CD8-positive, alpha-beta memory T cell (primary cell): ENCODE measurements at regions of chr2 and their contacts with region 1.

Region 1: GRCh38 chr2:44955593-44956392 is 14.3 kb downstream of the SIX3 start:
- DNase-seq: peak; percentile 43 to 69 (median 64)
- H3K4me3 ChIP-seq: no peak overlapping the region
- H3K4me3 Mint-ChIP-seq: no peak overlapping the region
- H3K27ac ChIP-seq: no peak overlapping the region
- H3K27ac Mint-ChIP-seq: no peak overlapping the region
- H3K4me1 ChIP-seq: peaks cover 7% of the 10 kb centered on the region
- H3K4me1 Mint-ChIP-seq: peaks cover 14 to 32% (median 21%) of the 10 kb centered on the region in 3 donors
- H3K27me3 ChIP-seq: peaks cover 16% of the 10 kb centered on the region
- H3K27me3 Mint-ChIP-seq: peaks cover 29 to 64% of the 10 kb centered on the region in 2 donors

Region 2: GRCh38 chr2:44044281-44044720 is 911.5 kb before region 1 on chr2:
- CTCF ChIA-PET with region 1: interaction called, 21 read pairs
- POLR2A ChIA-PET with region 1: no interaction called
- DNase-seq: peak; percentile 52 to 82 (median 55)
- H3K4me3 ChIP-seq: no peak overlapping the region
- H3K4me3 Mint-ChIP-seq: peak overlapping the region in 2 of 7 donors; percentile 20 to 46
- H3K27ac ChIP-seq: no peak overlapping the region
- H3K27ac Mint-ChIP-seq: peak overlapping the region in 1 of 8 donors; percentile 27
- H3K4me1 ChIP-seq: no peaks in the 10 kb centered on the region
- H3K4me1 Mint-ChIP-seq: peaks cover 4 to 7% (median 4%) of the 10 kb centered on the region in 3 donors
- H3K27me3 ChIP-seq: no peaks in the 10 kb centered on the region
- H3K27me3 Mint-ChIP-seq: peaks cover 0 to 11% of the 10 kb centered on the region in 2 donors

Region 3: DNA sequence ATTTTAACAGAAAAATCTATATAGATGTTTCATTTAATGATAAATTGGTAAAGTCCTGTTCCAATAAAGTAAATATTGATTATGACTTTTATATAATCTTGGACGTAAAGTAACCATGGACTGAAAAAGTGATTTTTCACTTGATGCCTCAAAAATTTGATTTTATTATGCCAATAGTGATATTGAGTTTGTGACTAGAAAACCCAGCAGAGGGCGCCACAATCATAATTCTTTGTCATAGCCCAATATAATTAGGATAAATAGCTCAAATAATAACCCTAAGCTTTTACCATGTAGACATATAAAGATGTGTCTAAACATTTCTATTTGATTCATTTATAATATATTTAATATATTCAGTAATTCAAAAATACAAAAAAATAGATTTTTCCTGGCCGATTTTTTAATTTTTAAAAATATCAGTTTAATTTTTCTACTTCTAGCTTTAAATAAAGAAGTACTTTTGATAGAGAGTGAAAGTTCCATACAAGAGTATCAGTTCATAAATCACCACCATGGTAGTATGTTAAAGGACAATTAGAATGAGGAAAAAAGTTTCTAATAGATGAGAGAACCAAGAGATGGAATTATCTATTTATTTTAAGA is 563.4 kb before region 1 on chr2:
- CTCF ChIA-PET with region 1: interaction called, 13 read pairs
- POLR2A ChIA-PET with region 1: no interaction called
- DNase-seq: peak; percentile 10 to 54 (median 14)
- H3K4me3 ChIP-seq: no peak overlapping the region
- H3K4me3 Mint-ChIP-seq: no peak overlapping the region
- H3K27ac ChIP-seq: no peak overlapping the region
- H3K27ac Mint-ChIP-seq: no peak overlapping the region
- H3K4me1 ChIP-seq: no peaks in the 10 kb centered on the region
- H3K4me1 Mint-ChIP-seq: peaks cover 0 to 10% (median 3%) of the 10 kb centered on the region in 3 donors
- H3K27me3 ChIP-seq: no peaks in the 10 kb centered on the region
- H3K27me3 Mint-ChIP-seq: no peaks in the 10 kb centered on the region

Region 4: GRCh38 chr2:44479122-44479887 is 476.5 kb before region 1 on chr2:
- CTCF ChIA-PET with region 1: interaction called, 37 read pairs
- POLR2A ChIA-PET with region 1: no interaction called
- DNase-seq: peak in 4 of 5 donors; percentile 8 to 62 (median 52)
- H3K4me3 ChIP-seq: no peak overlapping the region
- H3K4me3 Mint-ChIP-seq: no peak overlapping the region
- H3K27ac ChIP-seq: no peak overlapping the region
- H3K27ac Mint-ChIP-seq: peak overlapping the region in 1 of 8 donors; percentile 64
- H3K4me1 ChIP-seq: no peaks in the 10 kb centered on the region
- H3K4me1 Mint-ChIP-seq: peaks cover 0 to 7% (median 3%) of the 10 kb centered on the region in 3 donors
- H3K27me3 ChIP-seq: no peaks in the 10 kb centered on the region
- H3K27me3 Mint-ChIP-seq: no peaks in the 10 kb centered on the region

Region 5: GRCh38 chr2:45070113-45070652 is 114.4 kb after region 1 on chr2:
- CTCF ChIA-PET with region 1: no interaction called
- POLR2A ChIA-PET with region 1: no interaction called
- DNase-seq: no peak
- H3K4me3 ChIP-seq: no peak overlapping the region
- H3K4me3 Mint-ChIP-seq: no peak overlapping the region
- H3K27ac ChIP-seq: no peak overlapping the region
- H3K27ac Mint-ChIP-seq: no peak overlapping the region
- H3K4me1 ChIP-seq: no peaks in the 10 kb centered on the region
- H3K4me1 Mint-ChIP-seq: no peaks in the 10 kb centered on the region
- H3K27me3 ChIP-seq: no peaks in the 10 kb centered on the region
- H3K27me3 Mint-ChIP-seq: peaks cover 8 to 49% of the 10 kb centered on the region in 2 donors